ENCODE measurements at regions of chr18 and their contacts with region 1.

Region 1: DNA sequence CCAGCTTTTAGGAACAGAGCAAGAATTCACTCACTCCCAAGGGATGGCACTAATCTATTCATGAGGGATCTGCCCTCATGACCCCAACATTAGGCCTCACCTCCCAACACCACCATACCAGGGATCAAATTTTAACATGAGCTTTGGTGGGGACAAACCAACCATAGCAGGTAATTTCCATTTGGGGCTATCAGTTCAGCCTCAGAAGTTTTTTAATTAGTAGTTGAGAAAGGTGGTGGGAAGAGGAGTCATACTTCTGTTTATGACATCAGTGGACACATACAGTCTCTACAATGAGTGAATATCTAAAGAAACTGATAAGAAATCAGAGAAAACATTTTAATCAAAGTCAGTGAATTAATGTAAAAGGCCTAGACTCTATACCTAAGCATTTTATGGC is 59.6 kb upstream of the EMILIN2 start:
- DNase-seq: no peak
- ATAC-seq: peak; percentile 40
- H3K4me3 Mint-ChIP-seq: no peak overlapping the region
- H3K27ac Mint-ChIP-seq: peak overlapping the region; percentile 59
- H3K4me1 Mint-ChIP-seq: peaks cover 8% of the 10 kb centered on the region
- H3K27me3 Mint-ChIP-seq: no peaks in the 10 kb centered on the region
- CTCF ChIP-seq: no peak

Region 2: GRCh38 chr18:2515908-2516625 is 271.2 kb before region 1 on chr18:
- CTCF ChIA-PET with region 1: no interaction called
- POLR2A ChIA-PET with region 1: no interaction called
- intact Hi-C with region 1: no loop called
- DNase-seq: no peak
- ATAC-seq: no peak
- H3K4me3 Mint-ChIP-seq: no peak overlapping the region
- H3K27ac Mint-ChIP-seq: no peak overlapping the region
- H3K4me1 Mint-ChIP-seq: peaks cover 16% of the 10 kb centered on the region
- H3K27me3 Mint-ChIP-seq: no peaks in the 10 kb centered on the region
- CTCF ChIP-seq: no peak

Region 3: GRCh38 chr18:2687390-2688001 is 99.7 kb before region 1 on chr18:
- CTCF ChIA-PET with region 1: no interaction called
- POLR2A ChIA-PET with region 1: no interaction called
- intact Hi-C with region 1: no loop called
- DNase-seq: no peak
- ATAC-seq: peak; percentile 42
- H3K4me3 Mint-ChIP-seq: peak overlapping the region; percentile 69
- H3K27ac Mint-ChIP-seq: peak overlapping the region; percentile 88
- H3K4me1 Mint-ChIP-seq: peaks cover 52% of the 10 kb centered on the region
- H3K27me3 Mint-ChIP-seq: no peaks in the 10 kb centered on the region
- CTCF ChIP-seq: no peak

Region 4: GRCh38 chr18:2906704-2907549 is 119.7 kb after region 1 on chr18:
- CTCF ChIA-PET with region 1: no interaction called
- POLR2A ChIA-PET with region 1: no interaction called
- intact Hi-C with region 1: loop called (anchors 5 kb)
- DNase-seq: peak; percentile 48
- ATAC-seq: peak; percentile 70
- H3K4me3 Mint-ChIP-seq: peak overlapping the region; percentile 71
- H3K27ac Mint-ChIP-seq: peak overlapping the region; percentile 8
- H3K4me1 Mint-ChIP-seq: peaks cover 17% of the 10 kb centered on the region
- H3K27me3 Mint-ChIP-seq: no peaks in the 10 kb centered on the region
- CTCF ChIP-seq: no peak